Posterior vena cava (tissue), 2 donors: ENCODE measurements at regions of chr9 and their contacts with region 1.

Region 1: GRCh38 chr9:130382636-130383349 is 62.0 kb upstream of the ASS1 start:
- DNase-seq: no peak

Region 2: GRCh38 chr9:130359819-130360218 is 23.0 kb before region 1 on chr9:
- intact Hi-C with region 1: loop called in 1 of 2 experiments (anchors 2 kb)
- DNase-seq: no peak

Region 3: GRCh38 chr9:130927995-130928900 is 545.5 kb after region 1 on chr9:
- intact Hi-C with region 1: no loop called
- DNase-seq: no peak

Region 4: GRCh38 chr9:130987738-130988399 is 605.1 kb after region 1 on chr9:
- intact Hi-C with region 1: loop called in 1 of 2 experiments (anchors 2 kb)
- DNase-seq: no peak